Panc1 (cell line): ENCODE measurements at regions of chr3 and their contacts with region 1.

Region 1: DNA sequence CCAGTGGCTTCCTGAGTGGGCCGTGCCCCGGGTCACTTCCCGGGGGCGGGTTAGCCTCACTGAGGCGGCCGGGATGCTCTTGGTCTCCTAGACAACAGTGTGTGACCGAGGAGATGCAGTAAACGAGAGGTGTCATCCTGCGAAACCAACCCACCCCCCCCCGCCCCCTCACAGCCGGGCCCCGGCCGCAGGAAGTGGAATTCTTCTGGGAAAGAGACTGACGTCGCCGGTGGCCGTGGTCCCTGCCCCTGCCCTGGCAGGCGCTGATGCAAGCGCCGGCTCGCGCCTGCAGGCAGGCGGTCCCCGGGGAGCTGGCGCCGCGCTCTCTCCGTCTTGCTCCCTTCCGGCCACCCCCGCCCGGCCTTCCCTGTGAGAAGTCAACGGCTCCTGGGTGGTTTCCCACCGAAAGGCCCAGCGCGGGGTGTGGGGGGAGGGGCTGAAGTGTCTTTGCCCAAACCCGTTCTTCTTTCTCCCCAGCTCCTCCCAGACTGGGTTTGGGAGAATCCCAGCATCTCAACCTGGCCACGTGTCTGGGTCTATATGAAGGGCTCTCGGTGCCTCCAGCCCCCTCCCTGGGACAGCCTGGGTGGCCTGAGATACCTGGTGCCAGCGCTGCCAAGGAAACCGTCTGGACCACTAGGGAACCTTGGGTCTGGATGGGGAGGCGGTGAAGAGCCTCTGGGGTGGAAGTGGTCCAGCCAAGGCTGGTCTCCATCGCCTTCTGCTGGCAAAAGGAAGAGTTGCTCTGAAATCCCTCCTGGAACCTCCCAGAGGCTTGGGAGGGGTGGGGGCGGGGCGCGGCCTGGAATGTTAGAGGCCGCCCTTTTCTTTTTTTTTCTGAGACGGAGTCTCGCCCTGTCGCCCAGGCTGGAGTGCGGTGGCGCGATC is 47.3 kb downstream of the BHLHE40 start:
- DNase-seq: peak; percentile 68
- ATAC-seq: peak; percentile 82
- H3K4me3 ChIP-seq: peak overlapping the region; percentile 48 to 55
- H3K27ac ChIP-seq: peak overlapping the region; percentile 92
- H3K4me1 ChIP-seq: peaks cover 31% of the 10 kb centered on the region
- H3K27me3 ChIP-seq: no peaks in the 10 kb centered on the region
- CTCF ChIP-seq: peak; percentile 84

Region 2: GRCh38 chr3:4986782-4987537 is 39.6 kb before region 1 on chr3:
- CTCF ChIA-PET with region 1: no interaction called
- POLR2A ChIA-PET with region 1: interaction called, 16 read pairs
- in situ Hi-C with region 1: no loop called
- intact Hi-C with region 1: loop called (anchors 1 kb)
- DNase-seq: no peak
- ATAC-seq: peak; percentile 84
- H3K4me3 ChIP-seq: peak overlapping the region; percentile 34 to 39
- H3K27ac ChIP-seq: peak overlapping the region; percentile 95
- H3K4me1 ChIP-seq: peaks cover 46% of the 10 kb centered on the region
- H3K27me3 ChIP-seq: no peaks in the 10 kb centered on the region
- CTCF ChIP-seq: no peak